Colonic mucosa (tissue), 4 donors: ENCODE measurements at regions of chr6 and their contacts with region 1.

Region 1: DNA sequence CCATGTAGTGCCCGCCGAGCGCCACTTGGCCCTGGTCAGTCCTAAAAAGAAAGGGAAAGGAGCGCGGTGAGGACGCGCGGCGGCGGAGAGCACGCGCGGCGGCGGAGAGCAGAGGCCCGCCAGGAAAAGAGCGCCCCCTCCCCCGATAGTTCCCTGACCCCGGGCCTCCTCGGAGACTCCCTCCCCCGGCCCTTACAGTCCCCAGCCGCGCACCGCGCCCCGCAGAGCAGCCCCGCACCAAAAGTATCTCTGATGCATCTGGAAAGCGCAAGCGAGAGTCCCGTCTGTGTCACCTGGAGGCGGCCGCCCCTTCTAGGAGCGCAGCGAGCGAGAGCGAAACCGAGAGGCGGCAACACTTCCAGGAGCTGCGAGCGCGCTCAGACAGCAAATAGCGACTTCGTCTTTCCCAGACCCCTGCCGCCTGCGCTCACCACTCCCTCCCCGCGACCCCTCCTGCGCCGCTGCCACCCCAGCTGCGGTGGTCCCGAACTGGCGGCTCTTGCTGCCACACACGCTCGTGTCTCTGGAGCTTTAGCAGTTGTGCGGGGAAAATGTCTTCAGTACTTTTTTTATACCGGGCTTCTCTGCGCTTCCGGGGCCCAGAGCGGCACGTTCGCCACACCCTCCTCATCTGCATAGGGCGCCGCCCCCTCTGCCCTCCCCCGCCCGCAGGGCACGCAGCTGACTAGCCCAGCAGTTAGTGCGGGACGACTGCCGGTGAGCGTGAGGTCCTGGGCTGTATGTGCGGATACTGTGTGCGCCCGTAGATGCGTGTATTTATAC is at the start of gene TENT5A:
- DNase-seq: peak; percentile 96
- H3K4me3 ChIP-seq: peak within 1 kb of the TSS; percentile 61
- H3K27ac ChIP-seq: peak within 1 kb of the TSS; percentile 97
- H3K4me1 ChIP-seq: peaks cover 4% of the 10 kb centered on the region
- H3K27me3 ChIP-seq: no peaks in the 10 kb centered on the region
- CTCF ChIP-seq: no peak
- total RNA-seq, gene TENT5A: 20.1 to 32.8 TPM

Region 2: DNA sequence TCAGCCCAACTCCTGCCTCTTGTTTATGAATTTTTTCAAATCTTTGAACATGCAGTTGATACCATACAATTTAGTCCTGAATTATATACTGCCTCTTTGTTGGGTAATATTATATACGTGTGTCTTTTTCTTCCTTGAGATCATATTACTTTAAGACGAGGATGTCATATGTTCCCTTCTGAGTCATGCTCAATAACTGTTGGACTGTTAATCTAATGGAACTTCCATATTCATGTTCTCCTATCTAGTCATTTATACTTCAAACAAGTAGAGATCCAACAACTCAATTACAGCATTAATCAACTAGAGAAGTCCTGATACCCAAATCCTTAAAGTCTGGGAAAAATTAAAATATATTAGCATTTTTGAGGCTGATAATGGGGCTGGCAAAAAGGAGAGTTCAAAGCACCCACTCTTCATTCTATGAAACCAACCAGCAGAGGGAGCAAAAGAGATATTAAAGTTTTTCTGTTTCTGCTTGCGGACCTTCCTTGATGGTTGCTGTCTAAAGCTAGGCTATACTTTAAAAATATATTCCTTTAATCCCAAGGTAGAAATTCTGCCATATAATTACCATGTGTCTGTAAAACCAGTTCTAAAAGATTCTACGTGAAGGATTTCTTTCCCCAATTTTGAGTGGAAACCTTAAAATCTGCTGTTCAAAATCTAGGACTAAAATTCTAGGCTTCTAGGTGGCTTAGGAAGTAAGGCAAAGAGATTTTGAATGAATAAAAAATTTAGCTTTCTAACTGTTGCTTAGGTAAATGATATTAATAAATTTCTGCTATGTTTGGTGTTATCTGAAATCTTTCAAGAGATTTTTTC is 1147.0 kb before region 1 on chr6:
- intact Hi-C with region 1: loop called (anchors 5 kb)
- DNase-seq: no peak
- H3K4me3 ChIP-seq: no peak overlapping the region
- H3K27ac ChIP-seq: no peak overlapping the region
- H3K4me1 ChIP-seq: no peaks in the 10 kb centered on the region
- H3K27me3 ChIP-seq: no peaks in the 10 kb centered on the region
- CTCF ChIP-seq: peak; percentile 32

Region 3: DNA sequence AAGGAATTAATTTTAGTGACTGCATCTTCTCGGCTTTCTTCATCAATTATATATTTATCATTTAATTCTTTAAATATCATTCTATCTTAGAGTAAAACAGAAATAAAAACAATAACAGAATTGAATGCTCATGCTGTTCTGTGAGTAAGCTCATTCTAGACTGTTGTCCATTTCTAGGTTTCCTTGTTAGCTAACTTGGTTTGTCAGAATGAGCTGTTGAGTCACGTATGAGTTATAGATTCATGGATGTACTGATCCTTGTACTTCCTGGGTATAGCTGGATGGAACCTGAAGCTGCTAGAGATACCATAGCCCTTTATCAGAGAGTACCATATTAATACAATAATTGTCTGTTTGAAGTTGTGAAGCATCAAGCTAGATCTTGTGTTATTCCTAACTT is 515.1 kb before region 1 on chr6:
- intact Hi-C with region 1: loop called (anchors 10 kb)
- DNase-seq: no peak
- H3K4me3 ChIP-seq: no peak overlapping the region
- H3K27ac ChIP-seq: no peak overlapping the region
- H3K4me1 ChIP-seq: no peaks in the 10 kb centered on the region
- H3K27me3 ChIP-seq: no peaks in the 10 kb centered on the region
- CTCF ChIP-seq: no peak

Region 4: DNA sequence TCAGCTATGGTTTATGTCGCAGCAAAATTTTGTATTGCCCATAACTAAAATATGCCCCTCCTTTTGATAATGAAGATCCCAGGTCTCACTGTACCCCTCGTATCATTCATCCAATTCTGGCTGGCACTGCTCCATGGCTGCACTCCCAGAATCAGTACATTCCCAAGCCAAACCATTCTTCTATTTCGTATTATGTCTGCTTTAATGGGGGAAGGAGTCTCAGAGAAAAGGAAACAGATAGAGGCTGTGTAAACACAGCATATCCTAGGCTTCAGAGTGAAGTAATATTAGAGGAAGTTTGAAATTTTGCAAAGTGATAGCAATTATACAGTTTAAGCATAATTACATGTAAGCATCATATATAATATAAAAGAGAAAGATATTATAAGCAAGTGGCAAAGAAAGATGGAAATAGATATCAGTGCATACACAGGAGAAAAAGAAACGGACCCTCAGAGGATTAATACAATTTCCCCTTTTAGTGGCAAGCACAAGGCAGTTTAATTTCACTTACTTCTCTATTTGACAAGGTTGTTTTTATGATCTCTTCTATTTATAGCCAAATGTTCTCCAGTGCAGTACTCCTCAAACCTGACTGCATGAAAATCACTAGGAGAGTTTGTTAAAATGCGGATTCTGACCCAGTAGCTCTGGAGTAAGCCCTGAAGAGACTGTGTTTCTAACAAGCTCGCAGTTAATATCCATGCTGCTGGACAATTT is 56.7 kb after region 1 on chr6:
- intact Hi-C with region 1: no loop called
- DNase-seq: no peak
- H3K4me3 ChIP-seq: no peak overlapping the region
- H3K27ac ChIP-seq: peak overlapping the region; percentile 21
- H3K4me1 ChIP-seq: no peaks in the 10 kb centered on the region
- H3K27me3 ChIP-seq: no peaks in the 10 kb centered on the region
- CTCF ChIP-seq: no peak

Region 5: DNA sequence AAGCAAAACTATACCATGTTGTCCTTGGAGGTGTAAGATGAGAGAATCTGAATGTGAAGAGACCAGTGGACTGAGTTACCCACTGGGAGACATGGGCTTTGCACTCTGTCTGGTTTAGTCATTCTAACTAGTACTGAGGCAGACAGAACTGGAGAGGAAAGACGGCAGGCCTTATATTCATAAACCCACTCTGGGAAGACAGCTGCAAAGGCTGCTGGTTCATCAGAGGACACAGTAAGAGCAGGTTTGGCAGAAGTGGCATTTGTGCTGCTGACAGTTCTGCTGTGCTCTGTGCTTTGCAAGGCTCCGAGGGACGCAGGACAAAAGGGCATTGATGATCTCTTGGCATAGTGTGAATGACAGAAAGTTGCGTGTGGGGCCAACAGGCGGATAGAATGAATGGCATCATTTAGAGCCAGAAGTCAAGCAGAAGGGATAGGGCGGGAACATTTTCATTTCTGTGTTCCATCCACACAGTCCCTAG is 142.5 kb after region 1 on chr6:
- intact Hi-C with region 1: no loop called
- DNase-seq: no peak
- H3K4me3 ChIP-seq: no peak overlapping the region
- H3K27ac ChIP-seq: no peak overlapping the region
- H3K4me1 ChIP-seq: no peaks in the 10 kb centered on the region
- H3K27me3 ChIP-seq: no peaks in the 10 kb centered on the region
- CTCF ChIP-seq: no peak

Region 6: GRCh38 chr6:81981812-81982211 is 229.5 kb after region 1 on chr6:
- intact Hi-C with region 1: loop called (anchors 10 kb)
- DNase-seq: no peak
- H3K4me3 ChIP-seq: no peak overlapping the region
- H3K27ac ChIP-seq: no peak overlapping the region
- H3K4me1 ChIP-seq: no peaks in the 10 kb centered on the region
- H3K27me3 ChIP-seq: no peaks in the 10 kb centered on the region
- CTCF ChIP-seq: no peak